Posterior vena cava (tissue), 2 donors: ENCODE measurements at regions of chr5 and their contacts with region 1.

Region 1: DNA sequence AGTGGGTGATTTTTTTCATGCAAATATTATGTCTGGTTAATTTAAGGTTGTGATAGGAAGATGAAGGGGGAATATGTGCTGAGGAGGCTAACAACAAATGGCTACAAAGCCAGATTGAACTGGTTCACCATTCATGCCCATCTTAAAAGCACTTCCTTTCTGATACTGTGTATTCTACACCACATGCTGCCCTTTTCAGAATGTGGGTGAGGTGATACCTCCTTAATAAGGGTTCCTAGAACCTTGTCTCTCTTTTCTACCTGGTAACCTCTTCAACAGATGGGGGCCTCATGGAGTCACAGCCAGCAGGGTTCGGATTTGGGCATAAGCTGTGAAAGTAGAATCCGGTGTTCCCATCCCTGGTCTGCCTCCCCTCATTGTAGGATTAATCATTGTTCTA is 1064.0 kb upstream of the SEMA6A start:
- DNase-seq: no peak

Region 2: GRCh38 chr5:117657541-117657940 is 19.0 kb after region 1 on chr5:
- intact Hi-C with region 1: loop called in 1 of 2 experiments (anchors 1 kb)
- DNase-seq: no peak